HEK293 (cell line): ENCODE measurements at regions of chr17 and their contacts with region 1.

Region 1: GRCh38 chr17:43576563-43577229 is 30.6 kb upstream of the ETV4 start:
- H3K4me3 ChIP-seq: no peak overlapping the region
- H3K27ac ChIP-seq: no peak overlapping the region
- H3K4me1 ChIP-seq: peaks cover 14% of the 10 kb centered on the region
- CTCF ChIP-seq: peak; percentile 81

Region 2: DNA sequence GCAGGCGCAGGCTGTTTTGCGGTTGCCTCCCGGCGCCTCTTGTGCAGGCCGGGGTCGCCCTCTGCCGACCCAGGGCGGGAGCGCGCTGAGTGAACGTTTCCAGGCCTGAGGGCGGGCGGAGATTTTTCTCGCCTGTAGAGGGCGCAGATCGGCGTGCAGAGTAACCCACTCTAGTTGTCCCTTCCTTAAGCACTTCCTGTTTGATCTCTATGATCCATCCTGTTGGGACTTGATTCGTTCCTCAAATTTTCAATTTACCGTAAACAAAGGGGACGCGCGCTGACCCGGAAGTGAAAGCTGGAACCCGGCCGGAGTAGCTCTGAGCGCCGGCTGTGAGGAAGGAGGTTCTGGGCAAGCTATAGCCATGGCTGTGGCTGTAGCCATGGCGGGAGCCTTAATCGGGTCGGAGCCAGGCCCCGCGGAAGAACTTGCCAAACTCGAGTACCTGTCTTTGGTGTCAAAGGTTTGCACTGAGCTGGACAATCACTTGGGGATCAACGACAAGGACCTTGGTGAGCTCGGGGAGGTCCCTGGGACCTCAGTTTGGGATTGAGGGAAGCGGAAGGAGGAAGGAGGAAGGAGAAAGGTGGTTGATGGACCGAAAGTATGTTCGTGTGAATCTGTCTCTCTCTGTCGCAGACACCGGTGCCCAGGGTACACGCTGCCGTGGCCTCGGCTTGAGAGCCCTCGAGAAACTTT is 92.9 kb before region 1 on chr17 and contains the start of gene DHX8:
- CTCF ChIA-PET with region 1: interaction called, 11 read pairs
- POLR2A ChIA-PET with region 1: interaction called, 3 read pairs
- H3K4me3 ChIP-seq: peak within 1 kb of the TSS; percentile 77
- H3K27ac ChIP-seq: peak within 1 kb of the TSS; percentile 65
- H3K4me1 ChIP-seq: peaks cover 7% of the 10 kb centered on the region; the same call in 1 of the 2 replicates
- CTCF ChIP-seq: peak; percentile 100

Region 3: DNA sequence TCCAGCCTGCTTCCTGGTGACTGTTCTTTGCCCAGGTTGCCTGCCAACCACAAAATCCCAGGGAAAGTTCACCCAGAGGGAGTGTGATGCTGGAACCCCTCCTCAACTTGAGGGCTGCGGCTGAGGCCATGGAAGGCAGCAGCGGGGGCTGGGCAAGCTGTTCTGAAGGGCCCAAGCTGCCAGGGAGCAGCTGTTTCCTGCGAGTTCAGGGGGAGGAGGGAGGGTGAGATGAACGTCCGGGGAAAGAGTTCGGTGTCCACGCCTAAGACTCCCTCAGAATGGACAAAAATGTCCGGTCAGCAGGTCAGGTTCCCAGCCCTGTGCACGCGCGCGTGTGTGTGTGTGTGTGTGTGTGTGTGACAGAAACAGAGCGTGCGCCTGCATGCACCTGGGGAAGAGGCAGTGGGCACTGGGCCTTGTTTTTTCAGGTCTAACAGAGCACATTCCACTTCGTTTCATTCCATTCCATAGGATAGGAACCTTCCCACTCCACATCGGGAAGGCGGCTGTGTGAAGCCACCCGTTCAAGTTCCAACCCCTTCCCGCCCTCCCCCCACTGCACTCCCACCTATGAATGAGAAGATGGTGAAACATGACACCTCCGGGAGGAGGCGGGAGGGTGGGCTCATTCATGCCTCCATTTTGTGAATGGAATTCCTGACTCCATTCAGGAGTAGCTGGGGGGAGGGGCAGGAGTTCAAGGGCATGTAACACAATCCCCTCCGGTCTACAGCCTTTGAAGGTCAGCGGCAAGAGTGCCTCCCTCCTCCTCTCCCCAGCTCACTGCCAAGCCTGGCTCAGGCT is 46.2 kb before region 1 on chr17:
- CTCF ChIA-PET with region 1: interaction called, 26 read pairs
- POLR2A ChIA-PET with region 1: no interaction called
- H3K4me3 ChIP-seq: no peak overlapping the region; the same call in 1 of the 2 replicates
- H3K27ac ChIP-seq: peak overlapping the region; percentile 19
- H3K4me1 ChIP-seq: peaks cover 18% of the 10 kb centered on the region
- CTCF ChIP-seq: no peak

Region 4: DNA sequence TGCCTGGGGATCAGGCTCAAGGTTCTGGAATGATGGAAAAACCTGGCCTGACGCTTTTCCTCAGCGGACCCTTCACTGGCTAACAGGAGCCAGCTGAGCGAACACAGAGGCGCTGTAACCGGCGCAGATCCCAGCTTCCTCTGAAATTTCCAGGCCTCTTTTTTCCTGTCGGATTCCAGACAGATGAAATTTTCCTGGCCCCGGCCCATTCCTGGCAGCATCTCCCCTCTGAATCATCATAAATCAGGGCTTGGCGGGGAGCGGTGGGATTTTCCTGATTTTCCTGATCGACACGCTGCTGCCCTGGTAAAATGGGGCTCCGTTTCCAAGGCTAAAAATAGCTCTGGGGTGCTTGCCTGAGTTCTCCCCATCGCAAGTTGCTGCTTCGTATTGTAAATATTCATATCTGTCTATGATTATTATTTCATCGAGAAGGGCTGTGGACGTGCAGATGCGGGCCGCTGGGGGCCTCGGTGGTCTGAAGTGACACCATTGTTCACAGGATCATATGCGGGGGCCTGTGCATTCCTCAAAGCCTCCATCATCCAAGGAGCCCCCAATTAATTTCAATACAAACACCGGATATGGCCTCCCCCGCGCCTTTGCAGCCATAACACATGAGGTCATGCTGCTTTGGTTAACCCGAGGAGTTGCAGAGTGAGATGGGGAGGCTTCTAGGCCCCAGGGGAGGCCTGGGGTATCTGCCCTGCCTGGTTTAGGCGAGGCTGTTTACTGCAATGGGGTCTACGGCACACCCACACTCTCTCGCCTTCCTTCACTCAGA is 15.3 kb after region 1 on chr17:
- CTCF ChIA-PET with region 1: interaction called, 50 read pairs
- POLR2A ChIA-PET with region 1: no interaction called
- H3K4me3 ChIP-seq: no peak overlapping the region
- H3K27ac ChIP-seq: peak overlapping the region; percentile 22; the same call in 1 of the 2 replicates
- H3K4me1 ChIP-seq: peaks cover 10% of the 10 kb centered on the region
- CTCF ChIP-seq: no peak

Region 5: GRCh38 chr17:43645765-43646481 is 69.2 kb after region 1 on chr17:
- CTCF ChIA-PET with region 1: interaction called, 17 read pairs
- POLR2A ChIA-PET with region 1: interaction called, 9 read pairs
- H3K4me3 ChIP-seq: no peak overlapping the region
- H3K27ac ChIP-seq: no peak overlapping the region
- H3K4me1 ChIP-seq: no peaks in the 10 kb centered on the region
- CTCF ChIP-seq: no peak

Region 6: GRCh38 chr17:43760254-43760852 is 183.7 kb after region 1 on chr17:
- CTCF ChIA-PET with region 1: interaction called, 132 read pairs
- POLR2A ChIA-PET with region 1: interaction called, 4 read pairs
- H3K4me3 ChIP-seq: no peak overlapping the region
- H3K27ac ChIP-seq: no peak overlapping the region
- H3K4me1 ChIP-seq: peaks cover 2% of the 10 kb centered on the region; the same call in 1 of the 2 replicates
- CTCF ChIP-seq: peak; percentile 100